ENCODE measurements at regions of chr5 and their contacts with region 1.

Region 1: GRCh38 chr5:135457424-135458071 is 5.4 kb upstream of the TIFAB start:
- DNase-seq: peak; percentile 77
- ATAC-seq: peak; percentile 41

Region 2: DNA sequence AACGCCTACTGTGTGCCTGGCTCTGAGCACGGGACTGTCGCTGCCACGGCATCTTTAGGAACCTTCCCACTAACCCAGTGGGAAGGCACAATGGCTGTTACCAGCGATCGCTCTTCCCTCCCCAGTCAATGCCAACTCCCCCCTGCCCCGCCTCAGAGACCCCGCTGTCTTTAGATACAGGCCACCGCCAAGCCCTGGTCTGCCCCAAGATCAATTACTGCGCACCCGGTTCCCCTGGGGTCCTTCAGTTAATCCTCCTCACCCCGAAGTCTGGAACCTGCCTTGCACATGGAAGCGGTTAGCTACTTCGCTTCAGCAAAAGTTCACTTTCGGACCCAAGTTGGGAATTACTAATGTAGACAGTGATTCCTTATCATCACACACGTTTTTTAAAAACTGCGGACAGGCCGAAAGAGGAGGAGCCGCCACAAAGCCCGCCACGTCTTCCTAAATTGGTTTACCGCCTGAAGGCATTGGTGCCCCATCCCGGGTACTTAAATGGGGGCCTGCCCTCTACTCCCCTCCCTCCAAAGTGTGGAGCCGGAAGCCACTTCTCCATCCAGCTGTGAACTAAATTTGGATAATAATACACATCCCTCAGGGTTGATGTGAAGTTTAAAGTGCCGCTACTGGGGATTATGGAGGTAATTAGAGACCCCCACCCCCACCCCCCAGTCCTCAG is 57.9 kb before region 1 on chr5:
- intact Hi-C with region 1: loop called (anchors 5 kb)
- DNase-seq: no peak
- ATAC-seq: no peak

Region 3: GRCh38 chr5:135625961-135626360 is 168.4 kb after region 1 on chr5:
- intact Hi-C with region 1: no loop called
- DNase-seq: no peak
- ATAC-seq: no peak